Right cardiac atrium (tissue), 5 donors: ENCODE measurements at regions of chr10 and their contacts with region 1.

Region 1: DNA sequence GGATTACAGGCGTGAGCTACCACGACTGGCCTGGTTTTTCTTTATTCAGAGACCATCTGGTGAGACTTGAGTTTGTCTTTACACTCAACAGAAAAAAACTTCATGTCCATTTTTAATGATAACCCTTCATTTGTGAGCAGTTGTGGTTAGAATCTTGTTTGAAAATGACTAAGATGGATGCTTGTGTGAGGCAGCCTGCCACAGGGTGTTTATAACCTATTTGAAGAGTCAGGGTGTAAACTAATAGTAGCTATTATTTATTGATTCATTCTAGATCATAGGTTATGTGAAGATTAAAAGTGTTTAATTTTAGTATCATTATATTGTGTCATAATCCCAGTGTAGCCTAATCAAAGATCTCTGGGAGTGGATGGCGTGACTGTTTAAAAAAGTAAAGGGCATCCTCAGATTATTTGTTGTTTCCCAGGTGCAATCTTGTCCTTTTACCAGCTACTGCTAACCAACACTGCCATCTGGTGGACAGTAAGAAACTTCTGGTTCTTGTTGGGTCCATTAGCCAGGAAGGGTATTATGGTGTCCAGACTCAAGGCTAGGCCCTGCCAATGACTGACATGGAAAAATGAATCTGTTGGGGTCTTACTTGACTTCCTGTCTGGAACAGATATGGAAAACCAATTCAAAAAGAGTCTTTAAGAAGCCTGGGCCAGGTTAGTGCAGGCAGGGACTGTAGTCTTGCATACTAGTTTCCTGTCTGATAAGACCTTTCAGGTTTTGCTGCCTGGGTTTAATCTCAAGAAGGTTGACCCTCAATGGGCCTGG is 24.9 kb downstream of the NRBF2 start:
- DNase-seq: no peak
- ATAC-seq: peak; percentile 64 to 74
- H3K4me3 ChIP-seq: no peak overlapping the region
- H3K27ac ChIP-seq: no peak overlapping the region
- H3K4me1 ChIP-seq: no peaks in the 10 kb centered on the region
- H3K27me3 ChIP-seq: no peaks in the 10 kb centered on the region

Region 2: GRCh38 chr10:62437696-62438095 is 720.3 kb before region 1 on chr10:
- intact Hi-C with region 1: loop called in 1 of 4 experiments (anchors 10 kb)
- DNase-seq: no peak
- ATAC-seq: peak; percentile 54 to 63
- H3K4me3 ChIP-seq: no peak overlapping the region
- H3K27ac ChIP-seq: no peak overlapping the region
- H3K4me1 ChIP-seq: no peaks in the 10 kb centered on the region
- H3K27me3 ChIP-seq: no peaks in the 10 kb centered on the region

Region 3: DNA sequence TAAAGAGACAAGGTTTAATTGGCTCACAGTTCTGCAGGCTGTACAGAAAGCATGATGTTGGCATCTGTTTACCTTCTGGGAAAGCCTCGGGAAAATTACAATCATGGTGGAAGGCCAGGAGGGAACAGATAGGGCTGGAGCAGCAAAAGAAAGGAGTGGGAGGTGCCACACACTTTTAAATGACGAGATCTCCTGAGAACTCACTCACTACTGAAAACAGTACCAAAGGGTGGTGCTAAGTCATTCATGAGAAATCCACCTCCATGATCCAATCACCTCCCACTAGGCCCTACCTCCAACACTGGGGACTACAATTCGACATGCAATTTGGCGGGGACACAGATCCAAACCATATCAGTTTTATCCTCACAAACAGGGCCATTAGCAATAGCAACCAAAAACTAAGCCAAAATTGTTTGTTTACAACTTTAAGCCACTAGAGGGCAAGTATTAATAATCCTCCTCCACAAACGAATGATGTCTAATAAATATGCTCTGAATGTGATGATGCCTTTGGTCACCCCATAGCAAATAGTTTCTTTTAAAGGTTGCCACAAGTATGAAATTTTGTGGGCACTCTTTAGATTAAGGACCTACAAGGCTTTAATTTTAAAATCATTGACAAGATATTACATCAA is 154.1 kb before region 1 on chr10:
- intact Hi-C with region 1: loop called in 1 of 4 experiments (anchors 10 kb)
- DNase-seq: no peak
- ATAC-seq: no peak
- H3K4me3 ChIP-seq: no peak overlapping the region
- H3K27ac ChIP-seq: no peak overlapping the region
- H3K4me1 ChIP-seq: no peaks in the 10 kb centered on the region
- H3K27me3 ChIP-seq: no peaks in the 10 kb centered on the region

Region 4: DNA sequence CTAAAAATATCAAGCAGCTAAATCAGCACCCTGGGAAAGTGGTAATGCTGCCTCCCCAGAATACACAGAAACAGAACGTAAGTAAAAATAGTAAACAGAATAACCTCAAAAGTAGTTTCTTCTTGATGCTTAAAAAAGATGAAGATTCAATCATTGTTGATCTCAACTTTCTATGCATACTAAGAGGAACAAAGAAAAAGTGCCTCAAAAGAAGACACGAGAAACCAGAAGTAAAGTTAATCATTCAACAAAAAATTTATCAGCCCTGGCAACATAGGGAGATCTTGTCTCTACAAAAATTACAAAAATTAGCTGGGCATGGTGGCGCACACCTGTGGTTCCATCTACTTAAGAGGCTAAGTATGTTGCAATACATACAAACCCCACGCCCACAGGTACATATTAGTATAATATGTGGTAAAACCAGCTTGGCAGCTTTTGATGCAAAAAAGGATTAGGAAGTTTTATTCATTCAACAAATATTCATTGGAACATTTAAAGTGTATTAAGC is 128.8 kb after region 1 on chr10:
- intact Hi-C with region 1: no loop called
- DNase-seq: no peak
- ATAC-seq: no peak
- H3K4me3 ChIP-seq: no peak overlapping the region
- H3K27ac ChIP-seq: no peak overlapping the region
- H3K4me1 ChIP-seq: peaks cover 4% of the 10 kb centered on the region
- H3K27me3 ChIP-seq: no peaks in the 10 kb centered on the region